Panc1 (cell line): ENCODE measurements at regions of chr15 and their contacts with region 1.

Region 1: DNA sequence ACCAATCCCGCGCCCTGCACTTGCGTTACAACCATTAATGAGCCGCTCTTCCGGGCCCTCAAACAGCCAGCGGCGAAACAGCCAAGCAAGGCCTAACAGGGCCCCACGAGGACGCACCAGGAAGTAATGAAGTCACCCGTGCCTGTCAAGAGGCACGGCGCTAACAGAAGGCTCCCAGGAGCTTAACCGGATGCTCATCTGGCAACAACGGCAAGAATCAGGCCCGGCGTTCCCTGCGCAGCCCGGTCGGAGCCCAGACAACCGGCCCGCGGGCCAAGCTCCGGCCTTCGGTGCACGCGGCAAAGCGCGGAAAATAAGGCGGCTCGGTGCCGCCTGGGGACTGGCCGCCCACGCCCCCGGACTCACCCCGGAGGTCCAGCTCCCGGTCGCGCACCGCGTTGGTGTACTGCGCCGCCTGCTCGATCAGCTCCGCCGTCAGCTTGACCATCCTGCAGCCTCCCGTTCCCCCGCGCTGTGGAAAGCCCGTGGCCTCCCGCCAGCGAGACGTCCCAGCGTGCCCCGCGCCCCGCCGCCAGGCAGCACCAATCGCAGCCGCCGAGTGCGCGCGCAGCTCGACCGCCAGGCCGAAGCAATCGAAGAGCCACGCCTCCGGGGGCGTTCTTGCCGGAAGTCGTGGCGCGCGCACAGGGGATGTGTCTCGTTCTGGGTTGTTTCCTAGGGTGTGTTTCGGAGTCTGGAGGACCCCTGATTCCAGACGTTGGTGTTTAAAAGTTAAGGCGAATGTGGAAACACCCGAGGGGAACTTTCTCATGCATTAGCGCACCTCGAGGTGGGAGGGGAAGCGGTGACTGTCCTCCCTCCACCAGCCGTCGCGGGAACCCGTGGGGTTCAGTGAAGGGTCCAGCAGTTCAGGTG is at the start of gene SNRPA1:
- DNase-seq: no peak
- ATAC-seq: peak; percentile 92
- H3K4me3 ChIP-seq: peak within 1 kb of the TSS; percentile 89 to 90
- H3K27ac ChIP-seq: peak within 1 kb of the TSS; percentile 97
- H3K4me1 ChIP-seq: peaks cover 25% of the 10 kb centered on the region
- H3K27me3 ChIP-seq: no peaks in the 10 kb centered on the region
- CTCF ChIP-seq: no peak
- total RNA-seq, gene SNRPA1: 98.0 TPM

Region 2: GRCh38 chr15:101489633-101490407 is 194.9 kb after region 1 on chr15 and contains the start of gene PCSK6:
- CTCF ChIA-PET with region 1: interaction called, 6 read pairs
- POLR2A ChIA-PET with region 1: no interaction called
- in situ Hi-C with region 1: no loop called
- intact Hi-C with region 1: loop called (anchors 5 kb)
- DNase-seq: no peak
- ATAC-seq: peak; percentile 80
- H3K4me3 ChIP-seq: peak within 1 kb of the TSS; percentile 35 to 44
- H3K27ac ChIP-seq: no peak within 1 kb of the TSS
- H3K4me1 ChIP-seq: 0 out of 2 replicates have a peak, but pooled peaks cover 3% of the 10 kb centered on the region
- H3K27me3 ChIP-seq: peaks cover 2% of the 10 kb centered on the region
- CTCF ChIP-seq: no peak
- total RNA-seq, gene PCSK6: 10.6 TPM

Region 3: GRCh38 chr15:101578437-101578894 is 283.5 kb after region 1 on chr15:
- CTCF ChIA-PET with region 1: no interaction called
- POLR2A ChIA-PET with region 1: no interaction called
- in situ Hi-C with region 1: no loop called
- intact Hi-C with region 1: loop called (anchors 5 kb)
- DNase-seq: no peak
- ATAC-seq: peak; percentile 94
- H3K4me3 ChIP-seq: no peak overlapping the region
- H3K27ac ChIP-seq: no peak overlapping the region
- H3K4me1 ChIP-seq: 0 out of 2 replicates have a peak, but pooled peaks cover 2% of the 10 kb centered on the region
- H3K27me3 ChIP-seq: peaks cover 5% of the 10 kb centered on the region; the same call in 1 of the 2 replicates
- CTCF ChIP-seq: peak; percentile 82

Region 4: DNA sequence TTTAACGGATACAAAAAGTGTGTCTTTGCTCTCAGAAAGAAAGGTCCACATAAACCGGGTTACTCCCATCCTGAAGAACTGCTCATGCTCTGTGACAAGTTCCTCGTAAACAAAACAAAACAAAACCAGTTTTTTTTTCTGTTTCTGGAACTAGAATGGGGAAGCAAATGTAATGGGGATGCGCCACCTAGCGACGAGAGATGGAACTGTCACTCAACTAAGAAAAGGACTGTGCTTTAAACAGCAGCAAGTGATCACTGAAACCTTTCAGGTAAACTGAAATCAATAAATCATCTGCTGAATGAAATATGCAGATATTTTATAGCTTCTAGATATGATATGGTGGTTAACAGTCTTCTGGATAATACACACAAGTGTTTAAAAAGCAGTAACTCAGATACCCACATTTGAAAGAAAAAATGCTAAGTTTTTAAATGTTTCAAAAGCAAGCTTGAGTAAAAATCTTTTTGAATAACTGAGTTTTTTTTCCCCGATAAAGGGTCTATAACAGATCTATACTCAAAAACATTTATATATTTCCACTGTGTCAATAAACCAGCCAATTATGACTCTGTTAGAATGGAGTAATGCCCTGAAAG is 346.3 kb after region 1 on chr15:
- CTCF ChIA-PET with region 1: interaction called, 10 read pairs
- POLR2A ChIA-PET with region 1: no interaction called
- in situ Hi-C with region 1: no loop called
- intact Hi-C with region 1: loop called (anchors 1 kb)
- DNase-seq: peak; percentile 61
- ATAC-seq: peak; percentile 67
- H3K4me3 ChIP-seq: no peak overlapping the region
- H3K27ac ChIP-seq: no peak overlapping the region
- H3K4me1 ChIP-seq: no peaks in the 10 kb centered on the region; the same call in 1 of the 2 replicates
- H3K27me3 ChIP-seq: no peaks in the 10 kb centered on the region
- CTCF ChIP-seq: peak; percentile 92